PC-9 (cell line): ENCODE measurements at regions of chr2 and their contacts with region 1.

Region 1: DNA sequence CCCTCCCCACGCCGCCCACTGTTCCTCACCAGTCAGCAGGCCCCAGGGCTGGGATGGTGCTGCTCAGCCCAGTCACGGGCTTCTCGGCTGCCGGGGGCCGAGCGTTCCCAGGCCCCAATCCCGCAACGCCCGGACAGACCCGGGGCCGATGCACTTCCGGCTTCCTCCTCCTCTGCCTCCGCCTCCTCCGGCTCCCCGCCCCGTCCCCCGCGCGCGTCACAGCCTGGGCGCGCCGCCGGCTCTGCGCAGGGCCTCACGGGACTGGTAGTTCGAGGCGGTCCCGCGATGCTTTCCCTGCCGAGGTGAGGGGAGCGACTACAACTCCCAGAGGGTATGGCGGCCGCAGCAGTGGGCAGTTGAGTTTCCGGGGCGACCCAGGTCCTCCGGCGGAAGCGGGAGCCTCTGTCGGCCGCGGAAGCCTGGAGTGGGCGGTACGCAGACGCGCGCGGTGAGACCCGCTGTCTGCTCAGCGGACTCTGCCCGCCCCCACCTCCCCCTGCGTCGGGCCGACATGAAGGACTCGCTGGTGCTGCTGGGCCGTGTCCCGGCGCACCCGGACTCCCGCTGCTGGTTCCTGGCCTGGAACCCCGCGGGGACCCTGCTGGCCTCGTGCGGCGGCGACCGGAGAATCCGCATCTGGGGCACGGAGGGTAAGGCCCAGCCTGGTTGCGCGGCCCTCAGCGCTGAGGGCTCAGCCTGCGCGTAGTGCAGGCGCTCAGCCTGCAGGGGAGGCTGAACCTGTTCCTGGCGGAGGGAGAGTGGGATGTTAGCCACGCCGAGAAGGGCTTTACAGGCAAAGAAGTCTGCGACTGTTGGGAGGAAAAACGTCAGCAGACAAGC is at the starts of genes CIAO1 and TMEM127:
- DNase-seq: peak; percentile 96 to 99
- H3K4me3 ChIP-seq: peak within 1 kb of the TSS; percentile 92
- H3K27ac ChIP-seq: peak within 1 kb of the TSS; percentile 48
- H3K4me1 ChIP-seq: peaks cover 41% of the 10 kb centered on the region
- H3K27me3 ChIP-seq: no peaks in the 10 kb centered on the region
- CTCF ChIP-seq: peak; percentile 52; the same call in 1 of the 2 replicates
- total RNA-seq, gene CIAO1: 85.3 and 99.5 TPM in 2 replicates
- total RNA-seq, gene TMEM127: 38.4 and 50.3 TPM in 2 replicates

Region 2: DNA sequence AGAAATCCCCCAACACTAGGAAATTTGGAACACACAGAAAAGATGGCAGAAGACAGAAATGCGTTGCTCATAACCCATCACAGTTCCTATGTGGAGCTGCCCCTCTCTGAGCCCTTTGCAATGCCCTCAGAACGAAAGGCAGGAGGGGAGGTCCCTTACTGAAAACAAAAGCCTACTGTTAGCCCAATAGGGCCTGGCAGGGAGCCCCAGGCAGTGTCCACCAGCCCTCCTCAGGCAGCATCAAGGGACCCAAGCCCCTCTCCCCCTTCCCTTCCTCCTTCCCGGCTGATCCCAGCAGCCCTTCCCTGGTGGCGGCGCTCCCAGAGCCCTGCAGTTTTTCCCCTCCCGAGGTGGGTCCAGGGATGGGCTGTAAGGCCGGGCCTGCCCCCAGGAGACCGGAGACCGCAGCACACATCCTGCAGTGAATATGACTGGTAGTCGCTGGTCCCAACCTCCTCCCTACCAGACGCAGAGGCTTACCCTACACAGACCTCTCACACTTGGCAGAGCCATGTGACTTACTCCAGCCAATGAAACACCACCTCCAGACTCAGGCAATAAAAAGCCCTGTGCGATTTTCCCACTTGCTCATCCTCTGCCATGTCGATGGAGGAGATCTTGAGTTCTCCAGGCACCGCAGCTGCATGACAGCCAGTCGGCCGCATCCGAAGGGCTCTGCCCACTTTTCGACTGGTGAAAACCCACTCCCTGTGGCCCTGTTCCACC is 101.4 kb before region 1 on chr2:
- CTCF ChIA-PET with region 1: interaction called, 12 read pairs
- POLR2A ChIA-PET with region 1: no interaction called
- intact Hi-C with region 1: no loop called
- DNase-seq: no peak
- H3K4me3 ChIP-seq: no peak overlapping the region
- H3K27ac ChIP-seq: no peak overlapping the region
- H3K4me1 ChIP-seq: no peaks in the 10 kb centered on the region
- H3K27me3 ChIP-seq: peaks cover 2% of the 10 kb centered on the region; the same call in 1 of the 2 replicates
- CTCF ChIP-seq: no peak

Region 3: GRCh38 chr2:96208143-96209010 is 57.7 kb before region 1 on chr2 and contains the start of gene STARD7:
- CTCF ChIA-PET with region 1: interaction called, 4 read pairs
- POLR2A ChIA-PET with region 1: no interaction called
- intact Hi-C with region 1: loop called (anchors 1 kb)
- DNase-seq: peak; percentile 96 to 99
- H3K4me3 ChIP-seq: peak within 1 kb of the TSS; percentile 87
- H3K27ac ChIP-seq: peak within 1 kb of the TSS; percentile 72
- H3K4me1 ChIP-seq: peaks cover 36% of the 10 kb centered on the region
- H3K27me3 ChIP-seq: no peaks in the 10 kb centered on the region
- CTCF ChIP-seq: peak; percentile 47; the same call in 1 of the 2 replicates
- total RNA-seq, gene STARD7: 171 and 189 TPM in 2 replicates

Region 4: DNA sequence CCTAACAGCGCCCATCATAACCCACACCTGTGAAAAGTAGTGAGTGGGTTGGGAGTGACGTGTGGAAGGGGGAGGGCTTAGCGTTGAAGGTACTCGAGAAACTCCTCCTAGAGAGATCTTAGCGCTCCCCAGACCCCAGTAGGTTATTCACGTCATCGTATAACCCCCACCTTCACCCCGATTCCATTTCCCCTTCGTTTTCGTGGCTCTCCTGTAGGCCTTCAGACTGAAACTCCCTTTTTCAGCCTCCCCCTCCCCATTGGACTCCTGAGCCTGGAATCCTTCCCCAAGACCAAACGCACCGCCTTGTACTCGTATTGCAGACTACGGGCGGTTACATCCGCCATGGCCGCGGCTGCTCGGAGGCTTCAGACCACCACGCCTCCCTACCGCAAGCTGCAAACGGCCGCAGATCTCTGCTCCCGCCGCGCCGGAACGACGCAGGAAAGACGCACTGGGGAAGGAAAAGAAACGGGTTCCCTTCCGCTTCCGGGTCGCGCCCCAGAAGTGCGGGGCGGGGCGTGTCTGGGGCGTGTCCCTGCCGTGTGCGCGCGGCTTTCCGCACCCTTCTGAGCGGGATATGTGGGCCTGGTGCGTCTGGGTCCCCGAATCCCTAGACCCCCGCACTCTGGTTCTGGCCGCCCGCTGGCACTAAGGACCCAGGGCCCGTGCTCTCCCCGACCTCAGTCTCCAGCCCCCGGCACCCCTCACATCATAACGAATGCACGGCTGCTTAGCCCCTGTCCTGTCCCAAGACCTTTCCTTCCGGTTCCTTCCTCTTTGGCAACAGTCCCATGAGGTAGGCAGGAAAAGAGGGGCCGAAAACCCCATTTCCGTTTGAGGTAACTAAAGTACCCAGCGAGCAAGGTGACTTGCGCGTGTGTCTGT is 39.3 kb after region 1 on chr2 and contains the start of gene SNRNP200:
- CTCF ChIA-PET with region 1: no interaction called
- POLR2A ChIA-PET with region 1: no interaction called
- intact Hi-C with region 1: loop called (anchors 1 kb)
- DNase-seq: peak; percentile 84 to 88
- H3K4me3 ChIP-seq: peak within 1 kb of the TSS; percentile 86
- H3K27ac ChIP-seq: peak within 1 kb of the TSS; percentile 51
- H3K4me1 ChIP-seq: peaks cover 21% of the 10 kb centered on the region
- H3K27me3 ChIP-seq: no peaks in the 10 kb centered on the region
- CTCF ChIP-seq: no peak
- total RNA-seq, gene SNRNP200: 214 and 229 TPM in 2 replicates

Region 5: GRCh38 chr2:96336104-96336775 is 70.2 kb after region 1 on chr2:
- CTCF ChIA-PET with region 1: no interaction called
- POLR2A ChIA-PET with region 1: no interaction called
- intact Hi-C with region 1: loop called (anchors 5 kb)
- DNase-seq: no peak
- H3K4me3 ChIP-seq: peak overlapping the region; percentile 79
- H3K27ac ChIP-seq: no peak overlapping the region
- H3K4me1 ChIP-seq: peaks cover 23% of the 10 kb centered on the region
- H3K27me3 ChIP-seq: no peaks in the 10 kb centered on the region
- CTCF ChIP-seq: no peak